Vagina (tissue), 2 donors: ENCODE measurements at regions of chr2 and their contacts with region 1.

Region 1: GRCh38 chr2:48865704-48866103 is 110.2 kb upstream of the LHCGR start:
- DNase-seq: no peak
- H3K4me3 ChIP-seq: no peak overlapping the region
- H3K27ac ChIP-seq: no peak overlapping the region
- H3K4me1 ChIP-seq: no peaks in the 10 kb centered on the region
- H3K27me3 ChIP-seq: no peaks in the 10 kb centered on the region
- CTCF ChIP-seq: no peak
- POLR2A ChIP-seq: no peak

Region 2: GRCh38 chr2:48545244-48545643 is 320.5 kb before region 1 on chr2:
- intact Hi-C with region 1: no loop called
- DNase-seq: no peak
- H3K4me3 ChIP-seq: no peak overlapping the region
- H3K27ac ChIP-seq: no peak overlapping the region
- H3K4me1 ChIP-seq: peaks cover 18% of the 10 kb centered on the region
- H3K27me3 ChIP-seq: no peaks in the 10 kb centered on the region
- CTCF ChIP-seq: no peak
- POLR2A ChIP-seq: no peak

Region 3: DNA sequence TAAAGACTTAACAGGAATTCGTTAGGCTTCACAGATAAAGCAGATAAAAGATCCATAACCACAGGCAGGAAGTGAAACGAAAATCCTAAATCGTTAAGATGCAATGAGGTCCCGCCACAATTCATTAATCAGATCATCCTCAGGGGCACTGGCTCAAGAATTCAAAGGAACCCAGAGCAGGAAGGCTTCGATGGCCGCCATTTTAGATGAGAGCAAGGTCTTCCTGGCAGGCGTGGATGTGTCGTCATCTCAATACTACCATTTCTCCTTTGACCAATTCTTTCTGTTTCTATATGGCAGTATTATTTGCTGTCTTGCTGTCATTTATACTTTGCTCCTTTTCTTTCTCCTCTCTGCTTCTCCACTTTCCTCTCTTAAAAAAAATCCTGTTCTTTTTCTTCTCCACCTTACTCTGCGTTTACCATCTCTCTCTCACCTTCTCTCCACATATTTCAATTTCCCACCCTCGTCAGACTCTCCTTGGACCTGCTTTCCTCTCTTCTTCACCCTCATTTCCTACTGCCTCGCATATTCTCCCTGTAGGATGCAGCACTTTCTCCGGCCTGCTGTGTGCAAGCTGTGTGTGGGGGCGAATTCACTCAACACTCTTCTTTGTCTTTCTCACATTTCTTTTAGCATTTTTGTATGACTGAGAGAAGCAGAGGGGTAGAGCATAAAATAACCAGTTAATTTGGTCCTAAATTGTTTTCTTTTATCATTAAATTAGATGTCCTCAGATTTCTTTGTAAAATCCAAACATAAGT is 75.1 kb before region 1 on chr2:
- intact Hi-C with region 1: no loop called
- DNase-seq: no peak
- H3K4me3 ChIP-seq: no peak overlapping the region
- H3K27ac ChIP-seq: no peak overlapping the region
- H3K4me1 ChIP-seq: no peaks in the 10 kb centered on the region
- H3K27me3 ChIP-seq: no peaks in the 10 kb centered on the region
- CTCF ChIP-seq: no peak
- POLR2A ChIP-seq: no peak

Region 4: GRCh38 chr2:48984922-48985321 is 119.2 kb after region 1 on chr2:
- intact Hi-C with region 1: no loop called
- DNase-seq: no peak
- H3K4me3 ChIP-seq: no peak overlapping the region
- H3K27ac ChIP-seq: no peak overlapping the region
- H3K4me1 ChIP-seq: no peaks in the 10 kb centered on the region
- H3K27me3 ChIP-seq: no peaks in the 10 kb centered on the region
- CTCF ChIP-seq: no peak
- POLR2A ChIP-seq: no peak

Region 5: GRCh38 chr2:50641633-50642032 is 1775.9 kb after region 1 on chr2:
- intact Hi-C with region 1: loop called (anchors 5 kb)
- DNase-seq: no peak
- H3K4me3 ChIP-seq: no peak overlapping the region
- H3K27ac ChIP-seq: no peak overlapping the region
- H3K4me1 ChIP-seq: no peaks in the 10 kb centered on the region
- H3K27me3 ChIP-seq: no peaks in the 10 kb centered on the region
- CTCF ChIP-seq: no peak
- POLR2A ChIP-seq: no peak